T-cell (primary cell): ENCODE measurements at regions of chr12 and their contacts with region 1.

Region 1: DNA sequence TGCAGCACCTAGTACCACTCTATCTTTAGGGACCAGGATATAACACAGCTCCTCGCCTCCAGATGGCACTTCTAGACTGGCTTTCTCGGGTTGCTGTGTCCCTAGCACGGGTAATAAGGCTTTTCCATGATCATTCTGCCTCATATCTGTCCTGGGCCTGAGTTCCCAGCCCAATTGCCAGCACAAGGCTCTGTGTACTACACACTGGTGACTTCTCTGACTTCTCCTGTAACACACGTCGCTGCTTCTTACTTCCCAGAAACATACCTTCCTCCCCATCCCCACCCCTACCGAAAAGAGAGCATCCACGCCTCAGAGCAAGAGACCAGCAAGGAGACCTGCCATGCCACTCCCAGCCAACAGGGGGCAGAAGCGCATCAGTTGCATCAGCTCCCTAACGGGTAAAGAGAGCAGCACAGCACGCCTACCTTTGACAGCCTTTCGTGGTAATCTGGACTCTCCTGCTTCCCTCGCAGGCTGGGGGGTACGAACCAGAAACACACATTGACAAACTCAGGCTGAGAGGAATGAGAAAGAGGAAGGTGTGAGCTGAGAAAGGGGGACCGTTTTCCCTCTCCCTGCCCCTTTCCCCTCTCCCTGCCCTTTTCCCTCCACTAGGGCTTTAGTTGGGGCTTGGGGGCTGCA is 21.2 kb upstream of the ZNF740 start:
- DNase-seq: peak; percentile 69 to 93 (median 85)
- ATAC-seq: peak; percentile 97 to 99 (median 97)
- H3K4me3 ChIP-seq: no peak overlapping the region
- H3K4me3 Mint-ChIP-seq: no peak overlapping the region
- H3K27ac ChIP-seq: no peak overlapping the region
- H3K27ac Mint-ChIP-seq: peak overlapping the region in 1 of 2 donors; percentile 49
- H3K4me1 ChIP-seq: peaks cover 0 to 9% of the 10 kb centered on the region in 2 experiments
- H3K4me1 Mint-ChIP-seq: peaks cover 4 to 9% (median 5%) of the 10 kb centered on the region in 3 donors
- H3K27me3 ChIP-seq: no peaks in the 10 kb centered on the region
- H3K27me3 Mint-ChIP-seq: no peaks in the 10 kb centered on the region

Region 2: DNA sequence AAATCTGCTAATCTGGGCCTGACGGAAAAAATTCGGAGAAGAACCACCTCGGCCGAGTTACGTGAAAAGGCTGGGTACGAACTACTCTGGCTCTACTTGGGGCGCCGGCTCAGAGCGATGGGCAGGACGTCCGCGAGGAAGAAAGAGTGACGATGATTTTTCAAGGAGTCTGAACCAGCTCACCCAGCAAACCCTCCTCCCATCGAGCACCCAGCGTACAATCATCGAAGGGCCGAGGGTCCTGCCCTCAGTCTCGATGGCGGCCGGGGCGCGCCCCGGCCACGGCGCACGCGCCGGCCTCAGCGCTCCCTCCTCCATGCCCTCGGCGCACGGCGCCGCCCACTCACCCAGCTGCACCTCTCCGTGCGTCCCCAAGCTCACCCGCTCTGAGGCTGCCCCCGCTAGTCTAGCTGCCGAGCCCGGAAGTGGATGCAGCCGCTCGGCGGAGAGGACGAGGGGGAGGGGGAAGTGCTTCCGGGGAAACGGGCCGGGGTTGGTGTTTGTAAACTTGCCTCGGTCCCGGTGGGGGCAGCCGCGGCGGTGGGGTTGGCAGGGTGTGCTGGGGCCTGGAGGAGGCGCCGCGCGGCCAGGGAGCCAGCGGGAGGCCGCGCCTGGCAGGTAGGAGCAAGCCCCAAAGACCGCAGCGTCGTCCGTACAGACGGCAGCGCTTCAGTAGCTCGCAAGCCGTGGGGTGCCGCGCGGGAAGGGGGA is 21.1 kb after region 1 on chr12 and contains the starts of genes CSAD and ZNF740:
- CTCF ChIA-PET with region 1: interaction called, 3 to 11 read pairs
- POLR2A ChIA-PET with region 1: interaction called in 1 of 2 experiments, 4 read pairs
- DNase-seq: peak; percentile 91 to 99 (median 97)
- ATAC-seq: peak; percentile 94 to 97 (median 96)
- H3K4me3 ChIP-seq: peak within 1 kb of the TSS; percentile 74 to 93
- H3K4me3 Mint-ChIP-seq: peak within 1 kb of the TSS; percentile 89 to 97 (median 91)
- H3K27ac ChIP-seq: peak within 1 kb of the TSS; percentile 95
- H3K27ac Mint-ChIP-seq: peak within 1 kb of the TSS; percentile 96 to 98
- H3K4me1 ChIP-seq: peaks cover 33 to 52% of the 10 kb centered on the region in 2 experiments
- H3K4me1 Mint-ChIP-seq: peaks cover 52 to 59% (median 55%) of the 10 kb centered on the region in 3 donors
- H3K27me3 ChIP-seq: no peaks in the 10 kb centered on the region
- H3K27me3 Mint-ChIP-seq: no peaks in the 10 kb centered on the region
- total RNA-seq, gene CSAD: 48.6 to 69.6 (median 62.3) TPM
- total RNA-seq, gene ZNF740: 36.4 to 94.2 (median 83.9) TPM

Region 3: DNA sequence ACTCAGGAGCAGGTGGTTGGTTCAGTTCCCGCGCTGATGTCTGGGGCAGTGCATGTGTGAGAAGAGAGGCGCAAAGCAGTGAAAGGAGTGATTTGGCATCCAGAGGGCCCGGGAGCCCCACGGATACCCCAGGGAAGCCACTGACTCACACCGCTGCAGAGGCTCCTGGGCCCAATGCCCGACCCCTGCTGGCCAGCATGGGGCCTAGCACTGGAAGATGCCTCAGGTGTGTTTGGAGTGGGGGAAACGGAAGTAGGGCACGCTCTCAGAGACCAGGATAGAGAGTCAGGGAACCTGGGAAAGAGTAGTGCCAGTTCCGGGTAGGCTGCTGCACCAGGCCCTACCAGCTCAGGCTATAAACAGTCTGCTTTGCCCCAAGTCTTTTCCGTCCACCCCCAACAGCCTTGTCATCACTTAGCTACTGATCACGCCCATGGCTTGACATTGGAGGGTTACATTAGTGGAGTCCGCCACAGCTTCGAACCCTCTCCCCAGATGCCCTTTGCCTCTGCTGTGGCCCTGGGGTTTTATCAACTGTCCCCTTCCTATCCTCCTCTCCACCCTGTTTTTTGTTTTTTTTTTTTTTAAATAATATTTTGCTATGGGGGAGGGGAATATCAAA is 30.9 kb after region 1 on chr12:
- CTCF ChIA-PET with region 1: interaction called, 5 to 12 read pairs
- POLR2A ChIA-PET with region 1: no interaction called
- DNase-seq: peak in 29 of 35 experiments; percentile 16 to 68 (median 38)
- ATAC-seq: peak; percentile 80 to 95 (median 86)
- H3K4me3 ChIP-seq: no peak overlapping the region
- H3K4me3 Mint-ChIP-seq: no peak overlapping the region
- H3K27ac ChIP-seq: peak overlapping the region; percentile 21
- H3K27ac Mint-ChIP-seq: peak overlapping the region; percentile 65 to 80
- H3K4me1 ChIP-seq: peaks cover 0 to 21% of the 10 kb centered on the region in 2 experiments
- H3K4me1 Mint-ChIP-seq: peaks cover 24 to 40% (median 39%) of the 10 kb centered on the region in 3 donors
- H3K27me3 ChIP-seq: no peaks in the 10 kb centered on the region
- H3K27me3 Mint-ChIP-seq: no peaks in the 10 kb centered on the region

Region 4: DNA sequence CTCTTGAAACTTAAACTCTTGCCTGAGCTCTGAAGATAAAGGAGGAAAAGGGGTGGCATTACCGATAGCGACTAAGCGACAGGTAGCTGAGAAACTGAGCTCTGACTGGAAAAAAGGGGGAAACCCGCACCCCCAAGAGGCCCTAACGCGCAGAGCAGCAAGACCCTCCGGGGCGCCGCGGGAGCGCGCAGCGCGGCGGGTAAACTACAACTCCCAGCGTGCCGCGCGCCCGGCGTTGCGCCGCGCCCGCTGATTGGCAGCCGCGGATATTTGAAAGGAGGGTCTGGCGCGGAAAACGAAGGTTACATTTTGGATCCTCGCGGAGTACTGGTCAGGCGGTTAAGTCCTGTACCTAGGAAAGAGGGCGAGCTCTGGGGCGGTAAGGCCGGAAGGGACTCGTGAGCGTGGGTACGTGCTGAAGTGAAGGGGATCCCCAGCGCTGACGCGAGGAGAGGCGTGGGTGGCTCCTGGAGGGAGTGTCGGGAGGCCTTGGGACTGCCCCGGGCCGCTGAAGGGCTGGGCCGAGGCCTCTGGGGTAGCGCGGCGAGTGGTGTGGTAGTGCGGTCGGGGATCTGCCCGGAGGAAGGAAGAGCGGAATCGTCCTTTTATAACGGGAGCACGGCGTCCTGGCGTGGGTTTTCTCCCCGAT is 108.8 kb after region 1 on chr12 and contains the start of gene ESPL1:
- CTCF ChIA-PET with region 1: interaction called in 1 of 2 experiments, 14 read pairs
- POLR2A ChIA-PET with region 1: no interaction called
- DNase-seq: peak; percentile 68 to 89 (median 76)
- ATAC-seq: peak; percentile 91 to 96 (median 94)
- H3K4me3 ChIP-seq: peak within 1 kb of the TSS; percentile 81 to 92
- H3K4me3 Mint-ChIP-seq: peak within 1 kb of the TSS; percentile 89 to 98 (median 92)
- H3K27ac ChIP-seq: peak within 1 kb of the TSS; percentile 71
- H3K27ac Mint-ChIP-seq: peak within 1 kb of the TSS; percentile 75 to 91
- H3K4me1 ChIP-seq: peaks cover 0 to 16% of the 10 kb centered on the region in 2 experiments
- H3K4me1 Mint-ChIP-seq: peaks cover 20 to 22% (median 21%) of the 10 kb centered on the region in 3 donors
- H3K27me3 ChIP-seq: no peaks in the 10 kb centered on the region
- H3K27me3 Mint-ChIP-seq: peaks cover 0 to 3% of the 10 kb centered on the region in 2 donors
- total RNA-seq, gene ESPL1: 1.2 to 2.5 (median 1.6) TPM

Region 5: GRCh38 chr12:53287741-53288216 is 128.5 kb after region 1 on chr12:
- CTCF ChIA-PET with region 1: interaction called, 4 to 19 read pairs
- POLR2A ChIA-PET with region 1: interaction called in 1 of 2 experiments, 3 read pairs
- DNase-seq: peak; percentile 32 to 88 (median 67)
- ATAC-seq: peak; percentile 85 to 93 (median 93)
- H3K4me3 ChIP-seq: no peak overlapping the region
- H3K4me3 Mint-ChIP-seq: no peak overlapping the region
- H3K27ac ChIP-seq: no peak overlapping the region
- H3K27ac Mint-ChIP-seq: peak overlapping the region in 1 of 2 donors; percentile 50
- H3K4me1 ChIP-seq: peaks cover 0 to 5% of the 10 kb centered on the region in 2 experiments
- H3K4me1 Mint-ChIP-seq: peaks cover 4 to 8% (median 4%) of the 10 kb centered on the region in 3 donors
- H3K27me3 ChIP-seq: no peaks in the 10 kb centered on the region
- H3K27me3 Mint-ChIP-seq: no peaks in the 10 kb centered on the region

Region 6: GRCh38 chr12:53344824-53345485 is 185.6 kb after region 1 on chr12:
- CTCF ChIA-PET with region 1: interaction called in 1 of 2 experiments, 10 read pairs
- POLR2A ChIA-PET with region 1: no interaction called
- DNase-seq: peak; percentile 27 to 82 (median 56)
- ATAC-seq: peak; percentile 74 to 84 (median 84)
- H3K4me3 ChIP-seq: peak overlapping the region; percentile 55 to 61
- H3K4me3 Mint-ChIP-seq: peak overlapping the region; percentile 91 to 97 (median 91)
- H3K27ac ChIP-seq: peak overlapping the region; percentile 28
- H3K27ac Mint-ChIP-seq: peak overlapping the region; percentile 87 to 92
- H3K4me1 ChIP-seq: peaks cover 6 to 15% of the 10 kb centered on the region in 2 experiments
- H3K4me1 Mint-ChIP-seq: peaks cover 19 to 21% (median 20%) of the 10 kb centered on the region in 3 donors
- H3K27me3 ChIP-seq: peaks cover 0 to 5% of the 10 kb centered on the region in 2 experiments
- H3K27me3 Mint-ChIP-seq: peaks cover 0 to 3% of the 10 kb centered on the region in 2 donors